Posterior cingulate gyrus (tissue), 11 donors: ENCODE measurements at regions of chr12 and their contacts with region 1.

Region 1: DNA sequence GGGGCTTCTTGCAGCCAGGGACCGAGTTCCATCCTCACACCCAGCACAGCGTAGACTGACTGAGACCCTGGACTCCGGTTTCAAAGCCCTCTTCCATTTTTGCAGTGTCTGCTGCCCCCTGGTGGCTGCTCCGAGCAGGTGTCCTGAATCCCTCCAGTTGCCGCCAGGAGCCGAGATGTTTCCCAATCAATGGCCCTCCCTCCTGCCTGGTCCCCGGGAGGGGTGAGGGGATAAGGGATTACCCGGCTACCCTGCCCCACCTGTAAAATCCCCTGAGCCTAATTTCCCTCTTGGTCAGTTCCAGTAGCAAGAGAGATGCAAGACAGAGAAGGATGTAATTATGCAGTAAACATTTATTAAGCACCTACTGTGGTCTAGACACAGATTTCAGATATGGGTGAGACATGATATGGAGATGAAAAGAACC is 55.0 kb downstream of the PHETA1 start:
- DNase-seq: peak; percentile 47 to 96 (median 78)

Region 2: DNA sequence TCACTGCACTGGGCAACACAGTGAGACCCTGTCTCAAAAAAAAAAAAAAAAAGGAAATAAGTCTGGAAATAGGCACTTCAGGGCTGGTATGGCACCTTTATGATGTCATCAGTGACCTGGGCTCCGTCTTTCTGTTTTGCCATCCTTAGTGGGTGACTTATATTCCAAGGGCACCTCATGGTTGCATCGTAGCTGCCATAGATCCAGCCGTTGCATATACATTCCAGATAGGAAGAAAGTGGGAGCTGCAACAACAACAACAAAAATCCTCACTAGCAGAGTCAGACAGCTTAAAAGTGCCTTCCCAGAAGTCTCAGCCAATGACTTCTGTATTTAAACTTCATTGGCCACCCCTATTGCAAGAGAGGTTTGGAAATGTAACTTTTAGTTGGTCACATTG is 419.9 kb before region 1 on chr12:
- intact Hi-C with region 1: loop called (anchors 5 kb)
- DNase-seq: peak in 1 of 10 donors; percentile 12

Region 3: GRCh38 chr12:110937104-110937641 is 376.7 kb before region 1 on chr12:
- intact Hi-C with region 1: loop called (anchors 1 kb)
- DNase-seq: peak; percentile 43 to 95 (median 64)

Region 4: GRCh38 chr12:111024205-111024801 is 289.5 kb before region 1 on chr12:
- intact Hi-C with region 1: loop called (anchors 1 kb)
- DNase-seq: peak in 9 of 10 donors; percentile 40 to 92 (median 61)

Region 5: GRCh38 chr12:111298582-111299436 is 15.0 kb before region 1 on chr12:
- intact Hi-C with region 1: no loop called
- DNase-seq: peak in 9 of 10 donors; percentile 50 to 94 (median 67)

Region 6: DNA sequence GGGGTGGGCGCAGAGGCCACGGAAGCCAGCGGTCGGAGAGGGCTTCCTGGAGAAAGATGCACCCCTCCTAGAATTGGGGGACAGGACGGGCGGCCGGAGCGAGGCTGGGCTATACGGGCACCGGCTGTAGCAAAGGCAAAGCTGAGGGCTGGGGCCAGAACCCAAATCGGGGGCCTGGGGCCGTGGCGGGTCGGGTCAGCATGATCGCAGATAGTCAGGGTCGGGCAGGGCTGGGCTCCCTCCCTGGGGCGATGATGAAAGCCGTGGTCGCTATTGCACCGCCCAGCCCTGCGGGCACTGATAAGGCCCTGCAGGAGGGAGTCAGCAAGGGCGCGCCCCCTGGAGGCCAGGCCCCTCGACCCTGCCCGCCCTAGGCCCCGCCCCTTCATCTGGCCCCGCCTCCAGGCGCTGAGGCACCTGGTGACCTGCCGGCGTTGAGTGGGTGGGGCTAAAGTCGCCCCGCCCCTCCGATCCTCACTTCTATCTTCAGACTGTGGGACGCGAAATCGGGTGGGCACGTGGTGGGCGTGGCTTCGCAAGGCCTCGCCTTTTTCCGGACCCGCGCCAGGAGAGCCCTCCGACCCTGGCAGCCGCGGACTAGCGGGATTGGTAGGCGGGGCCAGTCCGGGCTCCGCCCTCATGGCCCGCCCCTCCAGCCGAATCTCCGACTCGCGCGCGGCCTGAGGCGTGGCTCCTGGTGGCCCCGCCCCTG is 91.5 kb after region 1 on chr12:
- intact Hi-C with region 1: no loop called
- DNase-seq: peak; percentile 80 to 99 (median 90)